CD14-positive monocyte (primary cell): ENCODE measurements at regions of chr2 and their contacts with region 1.

Region 1: GRCh38 chr2:219388127-219388844 is 574 bp upstream of the DNPEP start:
- DNase-seq: peak; percentile 92 to 98 (median 97)
- H3K4me3 ChIP-seq: peak overlapping the region in 2 of 3 experiments; percentile 15 to 60
- H3K4me3 Mint-ChIP-seq: peak overlapping the region; percentile 63 to 77
- H3K27ac ChIP-seq: peak overlapping the region in 1 of 2 donors; percentile 41
- H3K27ac Mint-ChIP-seq: peak overlapping the region; percentile 65 to 98 (median 93)
- H3K4me1 ChIP-seq: peaks cover 14 to 19% of the 10 kb centered on the region in 2 donors
- H3K4me1 Mint-ChIP-seq: peaks cover 21% of the 10 kb centered on the region
- H3K27me3 ChIP-seq: peaks cover 0 to 6% of the 10 kb centered on the region in 2 donors
- H3K27me3 Mint-ChIP-seq: peaks cover 6 to 12% (median 7%) of the 10 kb centered on the region in 3 donors
- CTCF ChIP-seq: peak; percentile 58

Region 2: DNA sequence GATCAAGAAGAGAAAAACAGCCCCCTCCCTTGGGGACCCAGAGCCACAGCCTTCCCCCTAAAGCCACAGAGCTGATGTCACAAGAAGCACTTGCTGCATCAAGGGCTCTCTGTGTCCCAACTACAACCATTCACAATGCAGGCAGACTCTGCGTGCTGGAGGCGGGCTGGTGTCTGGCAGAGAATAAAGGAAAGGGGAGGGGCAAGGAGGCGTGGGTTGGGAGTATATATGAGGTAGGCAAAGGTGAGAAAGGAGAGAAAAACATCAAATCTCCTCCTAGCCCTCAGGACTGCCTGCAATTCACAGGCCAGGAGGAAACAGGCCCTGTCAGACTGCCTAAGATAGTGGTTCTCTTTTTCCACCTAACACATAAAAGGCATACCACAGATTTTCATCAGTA is 278.8 kb before region 1 on chr2:
- intact Hi-C with region 1: no loop called
- DNase-seq: peak; percentile 10 to 16 (median 11)
- H3K4me3 ChIP-seq: peak overlapping the region in 1 of 3 experiments; percentile 4
- H3K4me3 Mint-ChIP-seq: peak overlapping the region in 1 of 2 donors; percentile 49
- H3K27ac ChIP-seq: peak overlapping the region; percentile 40 to 65
- H3K27ac Mint-ChIP-seq: peak overlapping the region; percentile 38 to 85 (median 70)
- H3K4me1 ChIP-seq: peaks cover 34 to 37% of the 10 kb centered on the region in 2 donors
- H3K4me1 Mint-ChIP-seq: peaks cover 45% of the 10 kb centered on the region
- H3K27me3 ChIP-seq: no peaks in the 10 kb centered on the region
- H3K27me3 Mint-ChIP-seq: peaks cover 0 to 3% (median 2%) of the 10 kb centered on the region in 3 donors
- CTCF ChIP-seq: no peak

Region 3: GRCh38 chr2:219177552-219178376 is 210.5 kb before region 1 on chr2 and contains the start of gene RETREG2:
- intact Hi-C with region 1: loop called in 1 of 2 experiments (anchors 1 kb)
- DNase-seq: peak; percentile 92 to 95 (median 94)
- H3K4me3 ChIP-seq: peak within 1 kb of the TSS; percentile 76 to 95 (median 92)
- H3K4me3 Mint-ChIP-seq: peak within 1 kb of the TSS; percentile 86 to 95
- H3K27ac ChIP-seq: peak within 1 kb of the TSS; percentile 99
- H3K27ac Mint-ChIP-seq: peak within 1 kb of the TSS; percentile 98 to 100 (median 99)
- H3K4me1 ChIP-seq: peaks cover 48 to 77% of the 10 kb centered on the region in 2 donors
- H3K4me1 Mint-ChIP-seq: peaks cover 68% of the 10 kb centered on the region
- H3K27me3 ChIP-seq: no peaks in the 10 kb centered on the region
- H3K27me3 Mint-ChIP-seq: peaks cover 0 to 3% (median 2%) of the 10 kb centered on the region in 3 donors
- CTCF ChIP-seq: no peak
- polyA plus RNA-seq, gene RETREG2: 37.7 to 60.9 (median 39.4) TPM

Region 4: DNA sequence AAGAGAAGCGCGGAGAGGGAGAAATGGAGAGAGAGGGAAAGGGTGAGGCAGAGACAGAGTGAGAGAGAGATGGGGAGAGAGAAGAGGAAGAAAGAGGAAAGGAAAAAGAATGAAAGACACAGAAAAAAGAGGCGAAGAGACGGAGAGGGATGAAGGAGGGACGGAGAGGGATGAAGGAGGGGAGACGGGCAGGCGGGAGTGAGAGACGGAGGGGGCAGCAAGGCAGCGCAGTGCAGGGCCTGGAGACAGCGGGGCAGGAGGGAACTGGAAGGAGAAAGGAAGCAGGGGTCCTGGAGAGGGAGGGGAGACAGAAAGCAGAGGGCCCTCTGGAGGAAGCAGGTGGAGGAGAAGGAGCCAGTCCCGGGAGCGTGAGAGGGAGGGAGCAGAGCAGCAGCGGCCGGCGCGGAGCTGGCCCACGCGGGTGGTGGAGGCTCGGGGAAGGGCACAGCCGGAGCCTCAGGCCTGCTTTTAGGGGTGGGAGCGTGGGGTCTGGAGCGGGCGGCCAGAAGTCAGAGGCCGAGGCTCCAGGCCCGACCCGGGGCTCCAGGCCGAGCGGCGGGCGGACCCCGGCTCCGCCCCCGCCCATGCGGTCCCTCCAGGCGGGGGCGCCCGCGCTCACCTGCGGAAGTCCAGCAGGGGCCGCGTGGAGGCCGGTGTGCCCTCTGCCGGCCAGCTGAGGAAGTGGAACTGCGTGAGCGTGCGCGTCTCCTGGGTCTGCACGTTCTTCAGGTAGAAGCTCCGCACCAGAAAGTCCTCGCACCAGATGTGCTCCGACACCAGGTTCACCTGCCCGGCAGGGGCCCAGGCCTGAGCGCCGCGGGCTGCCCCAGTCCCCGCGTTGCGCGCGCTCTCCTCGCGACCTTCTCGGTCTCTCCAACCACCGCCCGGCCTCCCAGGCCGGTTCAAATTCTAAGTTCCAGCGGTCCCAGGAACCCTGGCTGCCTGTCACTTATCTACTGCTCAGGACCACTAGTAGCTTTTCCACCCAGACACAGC is 93.6 kb before region 1 on chr2:
- intact Hi-C with region 1: loop called in 1 of 2 experiments (anchors 5 kb)
- DNase-seq: peak; percentile 79 to 84 (median 80)
- H3K4me3 ChIP-seq: peak overlapping the region; percentile 43 to 76 (median 48)
- H3K4me3 Mint-ChIP-seq: peak overlapping the region; percentile 79 to 95
- H3K27ac ChIP-seq: peak overlapping the region in 1 of 2 donors; percentile 31
- H3K27ac Mint-ChIP-seq: peak overlapping the region in 6 of 7 donors; percentile 41 to 80 (median 66)
- H3K4me1 ChIP-seq: peaks cover 10 to 15% of the 10 kb centered on the region in 2 donors
- H3K4me1 Mint-ChIP-seq: peaks cover 11% of the 10 kb centered on the region
- H3K27me3 ChIP-seq: peaks cover 0 to 28% of the 10 kb centered on the region in 2 donors
- H3K27me3 Mint-ChIP-seq: peaks cover 34 to 63% (median 38%) of the 10 kb centered on the region in 3 donors
- CTCF ChIP-seq: peak; percentile 100

Region 5: DNA sequence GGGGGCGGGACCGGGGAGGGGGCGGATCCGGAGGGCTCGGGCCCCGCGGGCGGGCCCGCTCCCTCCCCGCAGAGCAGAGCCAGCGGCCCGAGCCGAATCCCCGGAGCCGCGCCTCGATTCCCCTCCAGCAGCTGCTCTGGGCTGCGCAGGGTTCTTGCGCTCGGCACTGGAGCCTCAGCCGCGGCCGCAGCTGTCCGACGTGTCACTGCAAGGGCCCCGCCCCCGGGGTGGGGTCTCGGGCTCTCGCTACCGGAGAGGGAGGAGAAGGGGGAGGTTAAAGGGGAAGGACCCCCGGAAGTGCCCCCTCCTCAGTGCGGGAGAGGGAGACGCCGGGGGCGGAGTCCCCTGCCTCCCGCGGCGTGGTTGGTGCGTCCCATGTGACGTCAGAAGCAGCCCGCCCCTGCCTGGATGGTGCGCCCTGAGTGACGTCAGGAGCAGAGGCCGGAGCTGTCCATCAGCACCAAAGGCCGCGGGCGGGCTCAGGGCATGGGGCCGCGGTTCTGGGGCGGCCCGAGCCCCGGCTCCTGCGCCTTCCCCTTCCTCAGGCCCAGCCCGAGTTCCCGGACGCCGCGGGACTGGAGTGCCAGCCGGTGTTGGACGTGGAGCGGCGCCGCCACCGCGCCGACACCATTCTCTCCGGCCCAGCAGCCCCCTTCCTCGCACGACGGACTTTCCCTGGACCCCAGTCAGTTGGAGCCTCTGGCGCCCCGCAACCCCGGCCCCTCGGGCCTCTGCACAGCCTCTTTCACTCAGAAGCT is 155.5 kb after region 1 on chr2 and contains the starts of genes CHPF and TMEM198:
- intact Hi-C with region 1: loop called in 1 of 2 experiments (anchors 5 kb)
- DNase-seq: peak; percentile 87 to 94 (median 90)
- H3K4me3 ChIP-seq: peak within 1 kb of the TSS; percentile 32 to 76 (median 56)
- H3K4me3 Mint-ChIP-seq: peak within 1 kb of the TSS; percentile 78 to 87
- H3K27ac ChIP-seq: no peak within 1 kb of the TSS
- H3K27ac Mint-ChIP-seq: peak within 1 kb of the TSS in 3 of 7 donors; percentile 36 to 73 (median 53)
- H3K4me1 ChIP-seq: peaks cover 21 to 27% of the 10 kb centered on the region in 2 donors
- H3K4me1 Mint-ChIP-seq: peaks cover 9% of the 10 kb centered on the region
- H3K27me3 ChIP-seq: peaks cover 24 to 51% of the 10 kb centered on the region in 2 donors
- H3K27me3 Mint-ChIP-seq: peaks cover 38 to 63% (median 40%) of the 10 kb centered on the region in 3 donors
- CTCF ChIP-seq: no peak
- polyA plus RNA-seq, gene CHPF: 0.09 to 0.32 (median 0.09) TPM
- polyA plus RNA-seq, gene TMEM198: not detected